ENCODE measurements at regions of chr1 and their contacts with region 1.

Region 1: DNA sequence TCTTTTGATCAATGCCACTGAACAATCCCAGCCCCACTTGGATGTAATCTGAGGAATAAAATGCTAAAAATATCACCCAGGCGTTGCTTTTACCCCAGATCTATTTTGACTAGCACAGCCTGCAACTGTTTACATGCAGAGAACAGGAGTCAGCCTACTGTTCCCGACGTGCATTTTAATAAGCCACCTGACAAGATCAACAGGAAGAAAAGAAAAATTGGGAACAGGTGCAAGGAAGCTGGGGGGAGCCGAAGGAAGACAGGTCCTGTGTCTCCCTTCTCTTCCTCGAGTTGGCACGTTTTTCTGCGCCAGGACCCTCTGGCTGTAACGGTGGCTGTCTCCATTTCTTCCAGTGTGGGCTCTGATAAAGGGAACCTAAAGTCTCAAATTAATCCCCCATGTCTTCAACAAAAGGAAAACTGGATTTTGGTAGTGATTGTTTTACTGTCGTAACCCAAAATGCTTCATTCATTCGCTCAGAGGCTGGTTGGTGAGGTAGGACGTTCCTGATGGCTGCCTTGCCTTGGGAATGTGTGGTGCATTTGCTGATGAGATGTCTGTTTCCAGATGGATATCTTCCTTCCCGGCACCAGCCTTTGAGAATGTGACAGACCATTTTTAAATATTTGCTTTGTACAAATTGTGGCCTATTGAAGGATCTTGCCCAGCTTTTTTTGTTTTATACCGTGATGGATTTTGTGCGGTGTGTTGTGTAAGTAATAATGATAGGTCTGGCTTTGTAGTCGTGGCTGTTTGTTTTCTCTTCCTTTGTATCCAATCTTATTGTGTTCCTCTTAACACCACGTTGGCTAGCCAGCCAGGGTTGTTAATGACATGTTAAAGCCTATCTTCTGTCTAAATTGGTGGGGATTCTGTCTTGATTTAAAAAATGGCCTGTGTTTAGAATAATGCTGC is 117.5 kb downstream of the C1orf21 start:
- DNase-seq: no peak
- H3K4me3 ChIP-seq: no peak overlapping the region
- H3K27ac ChIP-seq: no peak overlapping the region
- H3K4me1 ChIP-seq: peaks cover 11% of the 10 kb centered on the region
- H3K27me3 ChIP-seq: no peaks in the 10 kb centered on the region
- CTCF ChIP-seq: no peak

Region 2: DNA sequence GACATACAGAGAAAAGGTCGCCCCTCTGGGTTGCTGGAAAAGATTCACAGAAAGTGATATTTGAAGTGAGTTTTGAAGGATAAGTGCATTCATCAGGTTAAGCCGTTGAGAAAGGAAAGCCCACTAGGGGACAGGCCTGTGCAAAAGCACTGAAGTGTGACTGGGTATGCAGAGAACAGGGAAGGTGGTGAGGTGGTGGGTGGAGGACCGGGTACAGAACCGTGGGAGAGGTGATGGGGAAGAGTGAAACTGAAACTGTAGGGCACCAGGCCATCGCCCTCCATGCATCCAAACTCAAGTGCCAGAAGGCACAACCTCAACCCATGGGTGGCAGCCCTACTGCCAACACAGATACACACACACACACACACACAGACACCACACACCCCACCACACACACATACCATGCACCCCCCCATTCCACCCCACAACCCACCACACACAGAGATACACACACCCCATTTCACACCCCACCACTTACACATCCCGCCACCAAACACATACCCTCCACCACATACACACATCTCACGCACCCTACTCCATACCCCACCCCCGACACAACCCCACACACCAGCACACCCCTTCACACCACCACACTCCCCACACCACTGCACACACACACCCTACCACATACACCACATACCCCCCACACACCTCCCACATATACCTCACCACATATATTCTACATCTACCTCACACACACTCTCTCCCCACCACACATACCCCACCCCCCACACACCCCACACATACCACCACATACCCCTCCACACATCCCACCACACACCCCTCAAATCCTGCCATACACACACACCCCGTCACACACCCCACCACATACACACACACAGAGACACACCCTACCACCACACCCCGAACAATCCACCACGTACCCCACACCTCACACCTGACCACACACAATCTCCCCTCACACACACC is 393.8 kb before region 1 on chr1:
- CTCF ChIA-PET with region 1: no interaction called
- POLR2A ChIA-PET with region 1: no interaction called
- intact Hi-C with region 1: no loop called
- DNase-seq: peak; percentile 42
- H3K4me3 ChIP-seq: no peak overlapping the region
- H3K27ac ChIP-seq: no peak overlapping the region
- H3K4me1 ChIP-seq: no peaks in the 10 kb centered on the region
- H3K27me3 ChIP-seq: no peaks in the 10 kb centered on the region
- CTCF ChIP-seq: peak; percentile 49

Region 3: GRCh38 chr1:184553845-184554244 is 49.5 kb after region 1 on chr1:
- CTCF ChIA-PET with region 1: no interaction called
- POLR2A ChIA-PET with region 1: no interaction called
- intact Hi-C with region 1: loop called (anchors 5 kb)
- DNase-seq: peak; percentile 30
- H3K4me3 ChIP-seq: no peak overlapping the region
- H3K27ac ChIP-seq: no peak overlapping the region
- H3K4me1 ChIP-seq: peaks cover 7% of the 10 kb centered on the region
- H3K27me3 ChIP-seq: no peaks in the 10 kb centered on the region
- CTCF ChIP-seq: no peak